ENCODE measurements at regions of chr17 and their contacts with region 1.

Region 1: GRCh38 chr17:21284319-21285163 is at the start of gene MAP2K3:
- DNase-seq: peak; percentile 98
- ATAC-seq: peak; percentile 69
- H3K4me3 Mint-ChIP-seq: peak within 1 kb of the TSS; percentile 95
- H3K27ac Mint-ChIP-seq: peak within 1 kb of the TSS; percentile 96
- H3K4me1 Mint-ChIP-seq: peaks cover 77% of the 10 kb centered on the region
- H3K27me3 Mint-ChIP-seq: no peaks in the 10 kb centered on the region
- CTCF ChIP-seq: no peak
- total RNA-seq, gene MAP2K3: 75.1 and 81.1 TPM in 2 replicates

Region 2: DNA sequence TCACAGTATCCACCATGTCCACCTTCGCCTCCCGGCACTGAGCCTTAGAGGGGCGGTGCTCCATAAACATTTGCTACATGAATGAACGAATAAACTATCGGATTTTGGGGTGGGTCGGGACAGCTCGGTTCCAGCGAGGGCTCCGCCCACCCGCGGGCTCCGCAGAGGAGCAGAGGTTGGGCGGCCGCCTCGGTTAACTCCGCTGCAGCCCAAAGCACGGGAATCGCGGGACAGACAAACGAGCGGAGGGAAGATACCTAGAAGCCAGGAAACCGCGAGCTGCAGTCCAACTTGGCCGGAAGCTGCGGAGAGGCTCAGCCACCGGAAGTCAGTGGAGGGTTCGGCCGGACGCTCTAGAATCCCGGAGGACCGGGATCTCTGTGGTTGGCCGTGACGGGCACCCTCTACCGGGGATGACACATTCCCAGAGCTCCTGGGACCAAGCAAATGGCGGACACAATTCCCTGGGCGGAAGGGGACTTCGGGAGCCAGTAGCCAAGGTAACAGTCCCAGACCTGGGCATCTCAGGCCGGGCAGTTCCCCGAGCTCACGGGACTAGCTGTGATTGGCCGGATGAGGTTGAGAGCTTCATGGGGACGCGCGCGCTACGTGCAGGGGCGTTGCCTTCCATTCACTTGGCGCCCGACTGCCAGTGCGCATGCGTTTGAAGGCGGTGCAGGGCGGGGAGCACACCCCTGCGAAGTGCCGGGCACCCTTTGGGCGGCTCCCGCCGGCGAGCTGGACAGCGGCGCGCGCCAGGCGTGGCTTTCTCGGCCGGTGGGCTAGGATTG is 1906.7 kb before region 1 on chr17:
- CTCF ChIA-PET with region 1: no interaction called
- POLR2A ChIA-PET with region 1: no interaction called
- intact Hi-C with region 1: loop called (anchors 10 kb)
- DNase-seq: peak; percentile 93
- ATAC-seq: peak; percentile 95
- H3K4me3 Mint-ChIP-seq: peak overlapping the region; percentile 100
- H3K27ac Mint-ChIP-seq: peak overlapping the region; percentile 99
- H3K4me1 Mint-ChIP-seq: peaks cover 31% of the 10 kb centered on the region
- H3K27me3 Mint-ChIP-seq: no peaks in the 10 kb centered on the region
- CTCF ChIP-seq: no peak

Region 3: DNA sequence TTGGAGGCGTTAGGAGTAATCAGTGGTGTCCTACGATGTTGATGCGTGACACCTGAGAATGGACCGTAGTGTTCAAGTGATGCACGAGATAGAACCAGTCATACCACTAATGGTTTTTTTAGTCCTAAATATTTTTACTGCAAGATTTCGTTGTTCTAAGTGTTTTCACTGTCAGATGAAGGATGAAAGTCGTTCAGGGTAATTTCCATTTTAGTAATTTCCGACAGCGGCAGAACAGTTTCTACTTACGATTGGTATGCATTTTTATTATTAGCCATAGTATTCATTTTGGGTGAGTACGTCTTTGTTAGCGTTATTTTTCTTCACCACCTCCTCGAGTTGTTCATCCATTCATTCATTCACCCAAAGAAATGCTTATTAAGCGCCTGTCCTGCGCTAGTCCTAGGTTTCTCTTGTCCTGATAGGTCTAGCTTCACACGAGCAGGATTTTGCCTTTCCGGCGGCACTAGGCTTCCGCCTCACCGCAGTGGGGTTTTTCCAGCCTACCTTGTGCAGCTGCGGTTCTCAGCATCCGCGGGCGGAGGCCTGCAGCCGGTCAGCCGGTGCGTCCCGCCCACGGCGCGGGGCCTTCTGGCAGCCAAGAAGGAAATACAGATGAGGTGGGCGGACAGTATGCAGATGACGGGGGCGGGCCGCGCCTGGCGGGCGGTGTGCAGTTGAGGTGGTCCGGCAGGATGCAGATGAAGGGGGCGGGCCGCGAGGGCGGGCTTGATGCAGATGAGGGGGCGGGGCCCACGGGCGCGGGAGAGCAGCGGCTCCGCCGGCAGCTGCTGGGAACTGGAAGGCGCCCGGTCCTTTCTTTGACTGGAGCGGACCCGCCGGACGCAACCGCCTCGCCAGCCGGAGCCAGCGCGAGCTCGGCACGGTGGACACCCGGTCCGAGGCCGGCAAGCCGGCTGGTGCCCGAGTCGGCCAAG is 1129.0 kb before region 1 on chr17:
- CTCF ChIA-PET with region 1: no interaction called
- POLR2A ChIA-PET with region 1: no interaction called
- intact Hi-C with region 1: loop called (anchors 1 kb)
- DNase-seq: peak; percentile 99
- ATAC-seq: peak; percentile 93
- H3K4me3 Mint-ChIP-seq: no peak overlapping the region
- H3K27ac Mint-ChIP-seq: no peak overlapping the region
- H3K4me1 Mint-ChIP-seq: peaks cover 6% of the 10 kb centered on the region
- H3K27me3 Mint-ChIP-seq: no peaks in the 10 kb centered on the region
- CTCF ChIP-seq: no peak

Region 4: GRCh38 chr17:21126645-21127510 is 157.7 kb before region 1 on chr17 and contains the start of gene DHRS7B:
- CTCF ChIA-PET with region 1: interaction called, 8 read pairs
- POLR2A ChIA-PET with region 1: no interaction called
- intact Hi-C with region 1: loop called (anchors 1 kb)
- DNase-seq: peak; percentile 95
- ATAC-seq: peak; percentile 90
- H3K4me3 Mint-ChIP-seq: peak within 1 kb of the TSS; percentile 94
- H3K27ac Mint-ChIP-seq: peak within 1 kb of the TSS; percentile 91
- H3K4me1 Mint-ChIP-seq: peaks cover 35% of the 10 kb centered on the region
- H3K27me3 Mint-ChIP-seq: peaks cover 3% of the 10 kb centered on the region
- CTCF ChIP-seq: no peak
- total RNA-seq, gene DHRS7B: 11.8 and 12.1 TPM in 2 replicates

Region 5: GRCh38 chr17:21252796-21253645 is 31.5 kb before region 1 on chr17 and contains the start of gene NATD1:
- CTCF ChIA-PET with region 1: no interaction called
- POLR2A ChIA-PET with region 1: interaction called, 10 read pairs
- intact Hi-C with region 1: loop called (anchors 1 kb)
- DNase-seq: peak; percentile 65
- ATAC-seq: peak; percentile 78
- H3K4me3 Mint-ChIP-seq: peak within 1 kb of the TSS; percentile 82
- H3K27ac Mint-ChIP-seq: peak within 1 kb of the TSS; percentile 76
- H3K4me1 Mint-ChIP-seq: peaks cover 21% of the 10 kb centered on the region
- H3K27me3 Mint-ChIP-seq: no peaks in the 10 kb centered on the region
- CTCF ChIP-seq: no peak
- total RNA-seq, gene NATD1: 1.5 and 1.7 TPM in 2 replicates

Region 6: DNA sequence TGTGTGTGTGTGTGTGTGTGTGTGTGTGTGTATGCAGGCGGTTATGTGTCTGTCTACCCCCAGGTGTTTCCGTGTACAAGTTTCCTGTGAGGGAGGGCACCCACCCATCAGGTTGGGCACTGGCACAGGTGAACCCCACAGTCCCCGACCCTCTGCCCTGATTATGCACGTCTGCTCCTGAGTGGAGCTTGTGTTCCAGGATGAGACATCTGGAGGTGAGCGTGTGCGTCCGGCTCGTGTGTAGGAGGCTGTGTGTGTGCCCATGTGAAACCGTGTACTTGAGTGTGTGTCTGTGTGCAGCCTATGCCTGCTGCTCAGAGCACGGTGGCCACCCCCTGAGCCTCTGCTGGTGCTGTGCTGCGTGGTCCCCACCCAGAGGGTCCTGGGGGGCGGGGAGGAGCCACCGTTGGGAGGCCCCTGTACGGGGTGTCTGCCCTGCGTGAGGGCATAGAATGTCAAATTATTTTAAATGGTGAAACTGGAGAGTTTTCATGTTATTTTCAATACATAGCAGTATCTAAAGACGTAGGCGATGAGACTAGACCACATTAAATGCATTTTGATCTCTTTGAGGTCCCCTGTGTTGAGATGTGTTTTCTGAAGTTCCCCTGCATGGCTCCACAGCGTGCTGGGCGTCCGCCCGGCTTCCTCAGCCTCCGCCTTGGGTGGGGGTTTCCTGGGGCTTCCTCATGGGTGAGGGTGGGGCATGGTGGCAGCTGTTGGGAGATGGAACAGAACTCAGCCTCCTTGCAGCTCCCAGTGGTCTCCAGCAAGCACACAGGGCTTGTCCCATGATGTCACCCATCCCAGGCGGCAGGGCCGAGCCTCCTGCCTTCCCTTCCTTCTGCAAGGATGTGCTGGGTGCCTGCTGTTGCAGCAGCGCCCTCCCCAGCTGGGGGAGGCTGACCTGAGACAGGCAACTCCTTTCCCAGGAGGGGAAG is 135.0 kb after region 1 on chr17:
- CTCF ChIA-PET with region 1: no interaction called
- POLR2A ChIA-PET with region 1: no interaction called
- intact Hi-C with region 1: no loop called
- DNase-seq: no peak
- ATAC-seq: no peak
- H3K4me3 Mint-ChIP-seq: no peak overlapping the region
- H3K27ac Mint-ChIP-seq: no peak overlapping the region
- H3K4me1 Mint-ChIP-seq: no peaks in the 10 kb centered on the region
- H3K27me3 Mint-ChIP-seq: no peaks in the 10 kb centered on the region
- CTCF ChIP-seq: no peak

Region 7: DNA sequence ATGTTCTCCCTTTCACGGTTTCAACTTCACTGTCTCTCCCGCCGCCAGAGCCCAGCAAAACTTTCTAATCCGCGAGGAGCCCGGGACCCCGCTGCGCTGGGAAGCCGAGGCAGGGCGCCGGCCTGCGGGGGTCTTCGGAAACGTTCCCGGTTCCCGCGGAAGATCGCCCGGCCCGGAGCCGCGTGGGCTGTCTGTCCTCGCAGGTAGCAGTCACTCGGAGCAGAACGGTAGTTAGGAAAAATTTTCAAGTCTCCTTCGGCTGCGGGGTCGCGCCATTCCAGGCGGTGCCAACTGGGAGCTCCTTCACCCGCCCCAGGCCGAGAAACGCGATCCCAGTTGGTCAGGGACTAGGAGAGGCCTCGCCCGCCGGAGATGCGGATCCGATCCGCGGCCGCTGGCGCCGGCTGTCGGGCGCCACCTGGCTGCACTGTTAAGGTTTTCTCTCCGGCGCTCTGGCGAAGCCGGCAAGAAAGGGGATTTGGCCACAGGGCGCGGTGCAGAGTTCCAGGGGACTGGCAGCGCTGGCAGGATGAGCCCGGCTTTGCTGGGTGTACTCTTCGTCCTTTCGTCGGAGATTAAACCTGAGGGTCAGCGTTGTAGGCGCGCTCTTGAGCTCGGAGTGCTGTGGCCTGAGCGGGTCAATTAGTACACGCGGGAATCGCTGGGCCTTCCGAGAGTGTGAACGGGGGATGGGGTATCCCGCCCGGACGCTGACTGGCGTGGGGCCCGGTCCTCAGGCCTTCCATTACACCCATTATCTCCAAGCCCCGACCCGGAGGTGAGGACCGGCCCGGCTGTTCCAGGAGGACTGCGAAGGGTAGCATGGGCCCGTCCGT is 227.0 kb after region 1 on chr17:
- CTCF ChIA-PET with region 1: interaction called, 81 read pairs
- POLR2A ChIA-PET with region 1: interaction called, 4 read pairs
- intact Hi-C with region 1: loop called (anchors 1 kb)
- DNase-seq: peak; percentile 63
- ATAC-seq: peak; percentile 80
- H3K4me3 Mint-ChIP-seq: peak overlapping the region; percentile 80
- H3K27ac Mint-ChIP-seq: no peak overlapping the region
- H3K4me1 Mint-ChIP-seq: peaks cover 26% of the 10 kb centered on the region
- H3K27me3 Mint-ChIP-seq: peaks cover 17% of the 10 kb centered on the region
- CTCF ChIP-seq: no peak

Measured in activated B cell treated with CpG ODN at 0.5 μM for 24 hours (primary cell).